ENCODE measurements at regions of chr13 and their contacts with region 1.

Region 1: GRCh38 chr13:39051157-39051556 is 12.9 kb downstream of the NHLRC3 start:
- DNase-seq: peak; percentile 45
- H3K4me3 Mint-ChIP-seq: no peak overlapping the region
- H3K27ac Mint-ChIP-seq: no peak overlapping the region
- H3K4me1 Mint-ChIP-seq: no peaks in the 10 kb centered on the region
- H3K27me3 Mint-ChIP-seq: no peaks in the 10 kb centered on the region
- CTCF ChIP-seq: peak; percentile 51

Region 2: DNA sequence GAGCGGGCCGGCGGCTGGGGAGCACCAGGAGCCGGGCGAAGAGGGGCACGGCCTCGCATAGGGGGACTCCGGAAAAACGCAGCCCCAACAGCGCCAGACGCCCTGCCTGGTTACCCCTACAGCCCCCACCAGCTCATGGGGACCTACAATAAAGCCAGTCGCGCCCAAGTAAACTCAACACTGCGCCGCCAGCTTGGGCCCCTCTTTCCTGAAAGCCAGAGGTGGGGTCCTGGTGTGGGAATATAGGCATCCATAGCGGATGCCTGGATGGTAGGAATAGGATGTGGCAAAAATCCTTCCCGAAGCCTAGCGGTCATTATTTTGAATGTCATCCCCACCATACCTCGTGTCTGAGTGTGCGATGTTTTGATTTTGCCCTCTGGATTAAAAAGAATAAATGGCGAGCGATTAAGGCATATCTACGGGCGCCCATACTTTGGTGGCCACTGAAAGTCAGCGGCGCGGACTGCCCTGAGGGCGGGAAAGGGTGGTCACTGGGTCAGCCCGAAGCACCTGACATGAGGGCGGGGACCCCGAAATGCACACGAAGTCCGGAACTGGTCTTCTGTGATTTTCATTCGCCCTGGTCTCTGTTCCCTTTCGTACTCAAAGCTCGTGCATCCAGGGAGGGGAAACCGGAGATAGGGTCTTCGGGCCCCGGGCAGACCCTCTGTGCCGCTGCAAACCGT is 13.1 kb before region 1 on chr13 and contains the starts of genes NHLRC3 and PROSER1:
- CTCF ChIA-PET with region 1: interaction called, 8 read pairs
- POLR2A ChIA-PET with region 1: interaction called, 17 read pairs
- intact Hi-C with region 1: no loop called
- DNase-seq: peak; percentile 96
- H3K4me3 Mint-ChIP-seq: peak within 1 kb of the TSS; percentile 97
- H3K27ac Mint-ChIP-seq: peak within 1 kb of the TSS; percentile 35
- H3K4me1 Mint-ChIP-seq: peaks cover 6% of the 10 kb centered on the region
- H3K27me3 Mint-ChIP-seq: no peaks in the 10 kb centered on the region
- CTCF ChIP-seq: no peak
- total RNA-seq, gene NHLRC3: 11.3 and 13.2 TPM in 2 replicates
- total RNA-seq, gene PROSER1: 53.4 and 58.2 TPM in 2 replicates

Region 3: DNA sequence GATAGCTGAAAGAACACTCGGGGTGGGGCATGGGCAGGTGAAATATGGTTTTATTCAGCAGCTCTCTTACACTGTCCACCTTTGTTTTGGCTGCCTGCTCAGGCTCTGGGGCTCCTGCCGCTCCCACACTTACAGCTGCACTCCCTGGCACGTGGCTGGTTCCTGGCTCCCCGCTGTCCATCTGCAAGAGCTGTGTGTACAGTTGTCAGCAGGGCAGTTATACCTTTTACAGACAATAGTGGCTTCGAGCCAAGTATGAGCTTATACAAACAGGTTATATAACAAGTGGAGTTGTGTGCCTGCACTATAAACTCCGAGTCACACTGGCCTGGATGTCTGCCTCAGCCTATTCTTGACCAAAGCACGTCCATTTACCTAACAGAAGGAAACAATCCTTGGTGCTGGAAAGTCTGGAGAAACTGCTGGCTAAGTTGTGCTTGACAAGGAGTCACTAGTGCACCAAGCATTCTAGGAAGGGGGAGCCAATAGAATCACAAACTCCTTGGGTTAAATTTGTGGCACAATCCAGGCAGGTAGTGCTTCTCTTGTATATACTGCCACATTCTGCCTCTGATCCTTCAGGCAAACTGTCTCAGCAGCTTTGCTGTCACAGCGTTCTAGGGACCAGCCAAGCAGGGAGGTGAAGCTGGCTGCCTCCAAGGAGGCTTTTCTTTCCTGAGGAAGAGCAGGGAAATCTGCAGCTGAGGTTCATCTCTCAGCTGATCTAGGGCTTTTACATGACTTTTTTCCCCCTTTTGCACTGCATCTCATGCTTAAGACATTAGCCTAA is 55.3 kb after region 1 on chr13:
- CTCF ChIA-PET with region 1: no interaction called
- POLR2A ChIA-PET with region 1: no interaction called
- intact Hi-C with region 1: no loop called
- DNase-seq: peak; percentile 13
- H3K4me3 Mint-ChIP-seq: no peak overlapping the region
- H3K27ac Mint-ChIP-seq: no peak overlapping the region
- H3K4me1 Mint-ChIP-seq: no peaks in the 10 kb centered on the region
- H3K27me3 Mint-ChIP-seq: peaks cover 71% of the 10 kb centered on the region
- CTCF ChIP-seq: no peak

Region 4: GRCh38 chr13:39263033-39263432 is 211.9 kb after region 1 on chr13:
- CTCF ChIA-PET with region 1: interaction called, 3 read pairs
- POLR2A ChIA-PET with region 1: no interaction called
- intact Hi-C with region 1: loop called (anchors 1 kb)
- DNase-seq: peak; percentile 69
- H3K4me3 Mint-ChIP-seq: no peak overlapping the region
- H3K27ac Mint-ChIP-seq: no peak overlapping the region
- H3K4me1 Mint-ChIP-seq: no peaks in the 10 kb centered on the region
- H3K27me3 Mint-ChIP-seq: peaks cover 42% of the 10 kb centered on the region
- CTCF ChIP-seq: peak; percentile 64

Region 5: DNA sequence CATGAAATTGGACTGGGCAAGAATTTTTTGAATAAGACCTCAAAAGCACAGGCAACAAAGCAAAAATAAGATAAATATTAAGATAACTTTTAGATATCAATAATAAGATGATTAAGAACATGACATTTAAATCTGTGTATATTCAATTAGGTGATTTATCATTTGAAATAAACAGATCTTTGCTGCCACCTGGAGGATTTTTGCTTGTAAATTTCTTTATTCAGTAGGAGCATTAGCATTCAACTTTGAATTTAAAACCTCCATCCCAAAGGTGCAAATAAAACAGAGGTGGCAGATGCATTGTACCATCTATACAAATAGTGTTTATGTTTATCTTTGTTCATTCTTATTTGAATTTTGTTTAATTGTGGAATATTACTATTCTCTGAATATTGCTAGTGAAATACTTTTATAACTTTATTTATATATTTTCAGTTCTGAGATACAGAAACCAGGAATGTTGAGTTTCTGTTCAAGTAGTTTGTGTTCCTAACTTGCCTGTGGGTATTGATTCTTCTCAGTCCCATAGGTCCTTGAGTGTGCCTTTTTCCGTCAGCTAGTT is 625.2 kb after region 1 on chr13:
- CTCF ChIA-PET with region 1: interaction called, 6 read pairs
- POLR2A ChIA-PET with region 1: interaction called, 4 read pairs
- intact Hi-C with region 1: loop called (anchors 1 kb)
- DNase-seq: peak; percentile 60
- H3K4me3 Mint-ChIP-seq: no peak overlapping the region
- H3K27ac Mint-ChIP-seq: peak overlapping the region; percentile 55
- H3K4me1 Mint-ChIP-seq: no peaks in the 10 kb centered on the region
- H3K27me3 Mint-ChIP-seq: no peaks in the 10 kb centered on the region
- CTCF ChIP-seq: no peak

Region 6: GRCh38 chr13:39740783-39741182 is 689.6 kb after region 1 on chr13:
- CTCF ChIA-PET with region 1: no interaction called
- POLR2A ChIA-PET with region 1: no interaction called
- intact Hi-C with region 1: no loop called
- DNase-seq: no peak
- H3K4me3 Mint-ChIP-seq: no peak overlapping the region
- H3K27ac Mint-ChIP-seq: no peak overlapping the region
- H3K4me1 Mint-ChIP-seq: no peaks in the 10 kb centered on the region
- H3K27me3 Mint-ChIP-seq: no peaks in the 10 kb centered on the region
- CTCF ChIP-seq: no peak

Measured in MCF 10A (cell line).